ENCODE measurements at regions of chr3 and their contacts with region 1.

Region 1: GRCh38 chr3:39260957-39261356 is 18.9 kb downstream of the CX3CR1 start:
- DNase-seq: peak in 8 of 9 donors; percentile 17 to 78 (median 48)
- ATAC-seq: peak; percentile 96
- H3K4me3 ChIP-seq: no peak overlapping the region
- H3K4me3 Mint-ChIP-seq: peak overlapping the region in 2 of 10 donors; percentile 55 to 76
- H3K27ac ChIP-seq: no peak overlapping the region
- H3K27ac Mint-ChIP-seq: peak overlapping the region in 6 of 9 donors; percentile 14 to 87 (median 36)
- H3K4me1 ChIP-seq: peaks cover 0 to 73% of the 10 kb centered on the region in 2 donors
- H3K4me1 Mint-ChIP-seq: peaks cover 6 to 58% (median 8%) of the 10 kb centered on the region in 7 donors
- H3K27me3 ChIP-seq: no peaks in the 10 kb centered on the region
- H3K27me3 Mint-ChIP-seq: peaks cover 0 to 28% (median 9%) of the 10 kb centered on the region in 5 donors

Region 2: GRCh38 chr3:39208463-39209055 is 52.4 kb before region 1 on chr3:
- CTCF ChIA-PET with region 1: no interaction called
- POLR2A ChIA-PET with region 1: no interaction called
- intact Hi-C with region 1: loop called in 1 of 2 experiments (anchors 1 kb)
- DNase-seq: peak in 5 of 9 donors; percentile 12 to 36 (median 22)
- ATAC-seq: peak; percentile 70
- H3K4me3 ChIP-seq: no peak overlapping the region
- H3K4me3 Mint-ChIP-seq: no peak overlapping the region
- H3K27ac ChIP-seq: no peak overlapping the region
- H3K27ac Mint-ChIP-seq: no peak overlapping the region
- H3K4me1 ChIP-seq: peaks cover 0 to 6% of the 10 kb centered on the region in 2 donors
- H3K4me1 Mint-ChIP-seq: peaks cover 0 to 25% (median 7%) of the 10 kb centered on the region in 7 donors
- H3K27me3 ChIP-seq: no peaks in the 10 kb centered on the region
- H3K27me3 Mint-ChIP-seq: peaks cover 0 to 32% (median 3%) of the 10 kb centered on the region in 5 donors

Region 3: DNA sequence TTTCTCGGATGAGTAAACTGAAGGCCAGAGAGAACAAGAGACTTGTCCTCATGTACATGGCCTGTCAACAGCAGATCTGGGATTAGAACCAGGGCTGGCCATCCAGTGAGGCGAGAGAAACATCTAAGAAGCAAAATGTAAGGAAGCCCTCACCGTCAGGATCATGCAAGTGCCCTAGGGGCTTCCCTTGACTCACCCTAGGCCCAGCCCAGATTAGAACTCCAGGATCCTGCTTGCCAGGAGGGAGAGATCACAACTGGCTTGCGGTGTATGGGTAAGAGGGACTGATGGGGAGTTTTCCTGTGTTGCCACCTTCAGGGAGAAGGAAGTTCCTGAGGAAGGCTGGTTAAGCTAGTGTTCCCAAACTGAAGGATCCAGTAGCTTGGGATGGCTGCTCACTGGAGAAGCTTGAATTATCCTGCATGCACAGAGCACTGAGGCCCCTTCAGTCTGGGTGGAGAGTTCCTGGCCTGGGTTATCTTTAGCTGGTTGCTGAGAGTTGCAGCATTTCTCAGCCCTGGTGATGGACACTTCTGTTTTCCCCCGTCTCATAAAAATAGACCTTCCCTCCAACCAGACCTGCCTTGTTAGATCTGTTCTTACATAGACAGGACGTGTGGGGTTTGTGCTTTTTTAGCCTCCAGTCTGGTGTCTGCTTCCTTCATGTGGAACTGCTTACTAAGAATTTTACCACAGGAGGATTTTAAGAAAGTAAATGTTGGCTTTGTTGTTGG is 40.4 kb before region 1 on chr3:
- CTCF ChIA-PET with region 1: no interaction called
- POLR2A ChIA-PET with region 1: no interaction called
- intact Hi-C with region 1: loop called in 1 of 2 experiments (anchors 2 kb)
- DNase-seq: no peak
- ATAC-seq: peak; percentile 24
- H3K4me3 ChIP-seq: no peak overlapping the region
- H3K4me3 Mint-ChIP-seq: peak overlapping the region in 1 of 10 donors; percentile 70
- H3K27ac ChIP-seq: no peak overlapping the region
- H3K27ac Mint-ChIP-seq: peak overlapping the region in 1 of 9 donors; percentile 82
- H3K4me1 ChIP-seq: peaks cover 0 to 33% of the 10 kb centered on the region in 2 donors
- H3K4me1 Mint-ChIP-seq: peaks cover 0 to 41% (median 0%) of the 10 kb centered on the region in 7 donors
- H3K27me3 ChIP-seq: peaks cover 0 to 3% of the 10 kb centered on the region in 2 donors
- H3K27me3 Mint-ChIP-seq: peaks cover 0 to 58% (median 9%) of the 10 kb centered on the region in 5 donors

Region 4: GRCh38 chr3:39234705-39235104 is 26.3 kb before region 1 on chr3:
- CTCF ChIA-PET with region 1: no interaction called
- POLR2A ChIA-PET with region 1: no interaction called
- intact Hi-C with region 1: loop called in 1 of 2 experiments (anchors 2 kb)
- DNase-seq: peak in 4 of 9 donors; percentile 1 to 21 (median 7)
- ATAC-seq: peak; percentile 92
- H3K4me3 ChIP-seq: no peak overlapping the region
- H3K4me3 Mint-ChIP-seq: peak overlapping the region in 3 of 10 donors; percentile 51 to 85 (median 69)
- H3K27ac ChIP-seq: no peak overlapping the region
- H3K27ac Mint-ChIP-seq: peak overlapping the region in 4 of 9 donors; percentile 13 to 89 (median 22)
- H3K4me1 ChIP-seq: peaks cover 11 to 38% of the 10 kb centered on the region in 2 donors
- H3K4me1 Mint-ChIP-seq: peaks cover 11 to 33% (median 15%) of the 10 kb centered on the region in 7 donors
- H3K27me3 ChIP-seq: no peaks in the 10 kb centered on the region
- H3K27me3 Mint-ChIP-seq: peaks cover 2 to 75% (median 18%) of the 10 kb centered on the region in 5 donors

Region 5: DNA sequence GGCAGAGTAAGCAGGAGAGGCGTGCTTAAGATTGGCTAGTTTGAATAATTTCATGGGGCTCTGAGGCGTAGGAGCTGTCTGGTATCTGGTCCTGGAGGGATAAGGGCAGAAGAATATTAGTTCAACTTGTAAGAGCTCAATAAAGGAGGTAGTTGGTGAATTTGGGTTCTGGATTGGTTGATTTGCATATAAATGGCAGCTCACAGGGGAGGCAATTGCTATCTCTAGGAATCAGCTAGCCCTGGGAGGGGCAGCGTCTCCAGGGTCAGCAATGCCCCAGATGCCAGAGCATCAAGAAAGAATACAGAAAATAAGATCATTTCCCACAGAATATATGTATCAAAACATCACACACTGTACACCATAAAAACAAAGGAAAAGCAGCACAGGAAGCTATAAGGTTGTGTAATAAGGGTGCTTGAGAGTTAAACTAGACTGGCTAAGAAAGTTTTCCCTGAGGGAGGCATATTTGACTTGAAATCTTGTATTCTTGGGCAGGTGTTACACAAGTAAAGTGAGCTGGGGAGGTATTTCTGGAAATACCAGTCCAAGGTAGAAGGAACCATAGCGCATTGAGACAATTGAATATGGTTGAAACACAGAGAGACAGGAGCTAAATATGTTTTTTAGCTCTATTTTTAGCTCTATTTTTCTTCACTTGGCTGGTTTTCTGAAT is 212.6 kb after region 1 on chr3:
- CTCF ChIA-PET with region 1: no interaction called
- POLR2A ChIA-PET with region 1: no interaction called
- intact Hi-C with region 1: no loop called
- DNase-seq: no peak
- ATAC-seq: no peak
- H3K4me3 ChIP-seq: no peak overlapping the region
- H3K4me3 Mint-ChIP-seq: no peak overlapping the region
- H3K27ac ChIP-seq: no peak overlapping the region
- H3K27ac Mint-ChIP-seq: no peak overlapping the region
- H3K4me1 ChIP-seq: no peaks in the 10 kb centered on the region
- H3K4me1 Mint-ChIP-seq: no peaks in the 10 kb centered on the region
- H3K27me3 ChIP-seq: no peaks in the 10 kb centered on the region
- H3K27me3 Mint-ChIP-seq: peaks cover 15 to 24% (median 20%) of the 10 kb centered on the region in 5 donors